Right cardiac atrium (tissue), 5 donors: ENCODE measurements at regions of chr9 and their contacts with region 1.

Region 1: DNA sequence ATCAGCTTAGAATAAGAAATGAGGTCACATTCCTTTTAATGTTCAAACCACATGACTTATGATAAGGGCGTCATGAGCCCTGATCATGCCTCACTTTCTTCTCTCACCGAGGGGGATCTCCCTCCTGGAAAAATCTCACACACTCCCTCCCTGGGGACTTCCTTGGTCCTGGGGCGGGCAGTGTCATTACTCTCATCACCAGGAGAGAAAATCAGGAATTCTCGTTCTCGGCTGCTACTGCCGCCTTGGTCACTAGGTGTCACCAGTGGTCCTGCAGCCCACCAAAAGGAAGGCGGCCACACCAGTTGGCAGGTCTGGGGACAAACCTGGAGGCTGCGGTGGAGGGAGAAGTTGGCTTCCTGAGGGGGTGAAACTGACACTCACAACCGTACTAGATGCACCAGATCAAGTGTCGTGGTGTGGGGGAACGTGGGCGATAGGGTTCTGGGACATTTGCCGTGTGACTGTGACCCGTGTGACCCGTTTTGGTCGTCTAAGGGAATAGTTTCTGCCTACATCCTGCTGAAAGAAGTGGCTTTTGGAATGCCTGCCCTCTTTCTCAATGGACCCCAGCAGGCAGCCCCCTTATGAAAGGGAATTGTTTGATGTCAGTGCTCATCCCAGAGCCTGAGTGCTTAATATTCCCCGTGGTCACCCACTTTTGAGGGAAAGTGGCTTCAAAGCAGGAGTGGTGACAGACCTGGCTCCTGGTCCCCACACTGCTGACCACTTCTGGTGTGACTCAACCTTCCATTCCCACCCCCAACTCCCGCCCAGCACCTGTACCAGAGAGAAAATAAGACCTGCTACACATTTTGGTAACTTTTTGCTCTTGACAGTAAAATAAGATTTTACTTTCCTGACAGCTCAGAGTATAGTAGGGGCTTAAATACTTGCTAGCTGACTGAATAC is 63.2 kb downstream of the ACER2 start:
- DNase-seq: peak; percentile 70 to 83 (median 83)
- ATAC-seq: peak; percentile 78 to 80
- H3K4me3 ChIP-seq: no peak overlapping the region
- H3K27ac ChIP-seq: no peak overlapping the region
- H3K4me1 ChIP-seq: no peaks in the 10 kb centered on the region
- H3K27me3 ChIP-seq: no peaks in the 10 kb centered on the region

Region 2: GRCh38 chr9:19533373-19533772 is 61.4 kb after region 1 on chr9:
- intact Hi-C with region 1: no loop called
- DNase-seq: no peak
- ATAC-seq: peak in 1 of 2 donors; percentile 36
- H3K4me3 ChIP-seq: no peak overlapping the region
- H3K27ac ChIP-seq: no peak overlapping the region
- H3K4me1 ChIP-seq: no peaks in the 10 kb centered on the region
- H3K27me3 ChIP-seq: no peaks in the 10 kb centered on the region

Region 3: DNA sequence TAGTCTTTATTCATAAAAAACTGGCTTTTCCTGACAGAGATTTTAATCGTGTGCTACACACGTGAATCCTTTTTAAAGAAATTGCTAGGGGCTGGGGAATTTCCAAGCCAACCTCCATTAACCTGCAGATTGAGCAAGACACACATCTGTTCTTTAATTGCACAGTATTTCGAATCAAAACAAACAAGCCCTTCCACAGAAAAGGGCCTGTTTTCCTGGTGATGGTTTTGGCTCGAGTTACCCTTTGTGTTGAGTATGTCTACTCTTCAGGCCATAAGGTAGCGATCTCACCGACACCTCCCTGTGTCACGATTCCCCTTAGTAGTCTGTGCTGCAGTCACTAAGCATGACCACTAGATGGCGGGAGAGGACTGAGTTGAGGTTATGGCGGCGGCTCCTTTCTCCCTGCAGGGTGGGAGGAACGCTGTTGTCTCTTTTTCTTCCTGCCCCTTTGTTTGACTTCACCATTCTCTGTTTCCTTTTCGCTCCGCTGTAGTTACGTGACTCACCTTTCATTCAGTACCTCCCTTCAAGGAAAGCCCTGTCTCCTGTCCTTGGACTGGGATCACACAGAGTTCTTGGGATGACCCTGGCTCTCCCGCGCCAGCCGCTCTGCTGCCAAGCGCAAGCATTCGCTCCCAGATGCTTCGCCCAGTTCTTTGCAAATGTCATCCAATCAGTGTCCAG is 454.0 kb after region 1 on chr9:
- intact Hi-C with region 1: loop called in 1 of 4 experiments (anchors 5 kb)
- DNase-seq: peak; percentile 37 to 75 (median 70)
- ATAC-seq: peak; percentile 94 to 95
- H3K4me3 ChIP-seq: peak overlapping the region; percentile 50
- H3K27ac ChIP-seq: no peak overlapping the region
- H3K4me1 ChIP-seq: no peaks in the 10 kb centered on the region
- H3K27me3 ChIP-seq: no peaks in the 10 kb centered on the region